ENCODE measurements at regions of chr9 and their contacts with region 1.

Region 1: DNA sequence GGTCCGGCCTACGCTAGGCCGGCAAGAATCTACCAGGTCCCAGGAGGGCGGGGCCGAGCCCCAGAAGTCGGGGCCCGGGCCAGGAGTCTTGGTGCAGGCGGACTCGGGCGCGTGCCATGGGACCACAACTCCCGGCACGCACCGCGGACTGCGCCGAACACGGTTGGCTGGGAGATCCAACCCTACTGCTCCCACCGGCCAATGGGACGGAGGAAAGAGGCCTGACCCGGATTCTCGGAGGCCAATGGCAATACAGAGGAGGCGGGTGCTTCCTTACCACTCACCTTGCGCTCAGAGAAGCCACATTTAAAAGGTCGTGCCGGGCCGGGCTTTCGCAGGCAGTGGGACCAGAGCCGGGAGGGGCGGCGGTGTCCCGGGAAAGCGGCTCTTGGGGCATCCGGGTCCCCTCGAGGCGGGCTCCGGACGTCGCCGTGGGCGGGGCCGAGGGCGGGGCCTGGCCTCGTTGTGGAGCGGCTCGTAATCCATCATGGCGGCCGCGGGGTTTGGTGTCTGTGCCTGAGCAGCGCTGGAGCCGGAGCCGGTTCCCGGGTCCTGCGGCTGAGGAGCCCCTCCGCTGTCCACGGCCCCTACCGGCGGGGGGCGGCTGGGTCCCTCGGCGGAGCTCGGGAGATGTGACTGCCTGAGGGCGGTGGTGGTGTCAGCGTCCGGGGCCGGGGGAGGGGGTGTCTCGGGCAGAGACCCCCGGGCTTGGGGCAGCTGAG is 19.1 kb downstream of the EXOSC2 start:
- DNase-seq: peak; percentile 99
- H3K4me3 Mint-ChIP-seq: peak overlapping the region; percentile 94
- H3K27ac Mint-ChIP-seq: peak overlapping the region; percentile 98
- H3K4me1 Mint-ChIP-seq: peaks cover 8% of the 10 kb centered on the region
- H3K27me3 Mint-ChIP-seq: no peaks in the 10 kb centered on the region
- CTCF ChIP-seq: no peak

Region 2: GRCh38 chr9:130561056-130561455 is 151.7 kb before region 1 on chr9:
- CTCF ChIA-PET with region 1: no interaction called
- POLR2A ChIA-PET with region 1: no interaction called
- intact Hi-C with region 1: no loop called
- DNase-seq: peak; percentile 82
- H3K4me3 Mint-ChIP-seq: no peak overlapping the region
- H3K27ac Mint-ChIP-seq: peak overlapping the region; percentile 31
- H3K4me1 Mint-ChIP-seq: peaks cover 16% of the 10 kb centered on the region
- H3K27me3 Mint-ChIP-seq: no peaks in the 10 kb centered on the region
- CTCF ChIP-seq: no peak

Region 3: DNA sequence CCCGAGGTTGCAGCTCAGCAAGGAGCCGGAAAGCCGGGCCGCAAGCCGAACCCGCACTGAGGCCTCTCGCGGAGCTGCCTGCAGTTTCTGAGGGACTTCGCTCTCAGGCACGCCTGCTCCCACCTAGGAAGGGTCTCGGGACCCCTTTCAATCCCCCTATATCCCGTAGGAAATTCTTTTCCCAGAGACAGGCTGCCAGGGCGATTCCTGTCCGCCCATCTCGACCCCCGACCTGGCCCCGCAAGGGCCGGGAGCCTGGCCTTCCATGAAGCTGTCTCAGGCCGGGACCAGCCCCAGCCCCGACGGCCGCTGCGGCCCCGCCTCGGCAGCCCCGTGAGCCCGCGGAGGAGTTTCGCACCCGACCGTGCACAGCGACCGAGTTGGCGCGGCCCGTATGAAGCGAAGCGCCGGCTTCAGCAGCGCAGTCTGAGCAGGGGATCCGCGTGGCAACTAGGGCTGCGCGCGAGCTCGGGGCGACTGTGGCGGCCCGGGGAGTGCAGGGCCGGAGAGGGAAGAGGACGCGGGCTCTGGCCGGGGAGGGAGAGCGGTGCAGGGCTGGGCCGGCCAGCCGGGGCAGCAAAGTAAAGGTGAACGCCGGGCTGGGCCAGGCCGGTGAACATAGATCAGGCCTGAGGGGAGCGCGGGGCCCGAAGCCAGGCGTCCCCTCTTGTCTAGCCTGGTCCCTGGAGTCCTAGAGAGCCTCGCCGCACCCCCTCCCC is 49.3 kb before region 1 on chr9:
- CTCF ChIA-PET with region 1: no interaction called
- POLR2A ChIA-PET with region 1: no interaction called
- intact Hi-C with region 1: no loop called
- DNase-seq: no peak
- H3K4me3 Mint-ChIP-seq: no peak overlapping the region
- H3K27ac Mint-ChIP-seq: no peak overlapping the region
- H3K4me1 Mint-ChIP-seq: no peaks in the 10 kb centered on the region
- H3K27me3 Mint-ChIP-seq: peaks cover 83% of the 10 kb centered on the region
- CTCF ChIP-seq: no peak

Region 4: DNA sequence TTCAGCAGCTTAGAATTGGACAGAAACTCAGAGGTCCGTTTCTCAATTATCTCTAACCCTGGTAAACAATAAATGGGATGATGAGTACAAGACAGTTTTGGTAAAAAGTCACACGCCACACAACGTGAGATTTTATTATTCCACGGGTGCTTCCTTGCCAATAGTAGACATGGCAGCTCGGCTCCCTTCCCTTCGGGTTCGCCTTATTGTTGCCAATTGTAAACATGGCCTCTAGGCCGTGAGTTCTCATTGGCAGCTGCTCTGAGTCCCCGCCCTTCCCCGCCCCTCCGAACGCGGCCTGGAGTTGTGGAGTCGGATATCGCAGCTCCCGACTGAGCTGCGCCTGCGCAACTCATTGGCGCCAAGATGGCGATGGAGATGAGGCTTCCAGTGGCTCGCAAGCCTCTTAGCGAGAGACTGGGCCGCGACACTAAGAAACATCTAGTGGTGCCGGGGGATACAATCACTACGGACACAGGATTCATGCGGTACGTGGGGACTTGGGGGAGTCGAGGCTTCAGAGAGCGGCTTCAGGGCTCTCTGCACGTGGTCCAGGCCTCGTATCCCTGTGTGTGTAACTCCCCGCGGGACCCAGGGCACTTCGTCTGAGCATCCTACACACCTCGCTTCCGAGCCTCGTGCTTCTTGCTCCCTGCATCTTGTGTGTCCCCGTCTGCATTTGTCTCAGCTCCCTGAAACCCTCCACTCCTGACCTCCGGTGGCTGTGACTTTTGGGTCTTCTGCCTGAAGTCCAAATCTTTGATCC is 19.1 kb before region 1 on chr9 and contains the start of gene EXOSC2:
- CTCF ChIA-PET with region 1: interaction called, 29 read pairs
- POLR2A ChIA-PET with region 1: interaction called, 34 read pairs
- intact Hi-C with region 1: no loop called
- DNase-seq: peak; percentile 98
- H3K4me3 Mint-ChIP-seq: peak within 1 kb of the TSS; percentile 91
- H3K27ac Mint-ChIP-seq: peak within 1 kb of the TSS; percentile 89
- H3K4me1 Mint-ChIP-seq: peaks cover 41% of the 10 kb centered on the region
- H3K27me3 Mint-ChIP-seq: no peaks in the 10 kb centered on the region
- CTCF ChIP-seq: no peak
- total RNA-seq, gene EXOSC2: 42.3 and 57.7 TPM in 2 replicates

Region 5: GRCh38 chr9:130701056-130702022 is 11.4 kb before region 1 on chr9:
- CTCF ChIA-PET with region 1: interaction called, 29 read pairs
- POLR2A ChIA-PET with region 1: interaction called, 4 read pairs
- intact Hi-C with region 1: no loop called
- DNase-seq: peak; percentile 76
- H3K4me3 Mint-ChIP-seq: no peak overlapping the region
- H3K27ac Mint-ChIP-seq: no peak overlapping the region
- H3K4me1 Mint-ChIP-seq: peaks cover 19% of the 10 kb centered on the region
- H3K27me3 Mint-ChIP-seq: no peaks in the 10 kb centered on the region
- CTCF ChIP-seq: peak; percentile 79

Region 6: DNA sequence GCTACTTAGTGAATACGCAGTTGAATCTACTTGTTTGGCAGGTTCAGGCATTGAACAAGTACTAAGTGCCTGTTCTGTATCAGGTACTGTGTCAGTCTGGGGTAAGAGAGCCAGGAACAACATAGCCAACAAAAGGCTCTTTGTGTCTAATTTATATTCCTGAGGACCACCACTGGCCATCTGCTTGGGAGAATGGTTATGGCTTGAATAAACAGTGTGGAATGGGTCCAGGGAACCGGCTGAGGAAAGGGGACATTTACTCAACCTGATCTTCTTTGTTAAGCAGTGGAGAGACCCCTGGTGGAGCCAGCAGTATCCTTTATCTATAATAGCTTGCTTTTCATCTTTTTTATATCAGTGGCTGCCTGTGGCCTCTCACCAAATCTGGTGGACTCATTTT is 19.4 kb after region 1 on chr9:
- CTCF ChIA-PET with region 1: interaction called, 5 read pairs
- POLR2A ChIA-PET with region 1: interaction called, 13 read pairs
- intact Hi-C with region 1: no loop called
- DNase-seq: no peak
- H3K4me3 Mint-ChIP-seq: no peak overlapping the region
- H3K27ac Mint-ChIP-seq: peak overlapping the region; percentile 64
- H3K4me1 Mint-ChIP-seq: peaks cover 22% of the 10 kb centered on the region
- H3K27me3 Mint-ChIP-seq: no peaks in the 10 kb centered on the region
- CTCF ChIP-seq: no peak

Region 7: DNA sequence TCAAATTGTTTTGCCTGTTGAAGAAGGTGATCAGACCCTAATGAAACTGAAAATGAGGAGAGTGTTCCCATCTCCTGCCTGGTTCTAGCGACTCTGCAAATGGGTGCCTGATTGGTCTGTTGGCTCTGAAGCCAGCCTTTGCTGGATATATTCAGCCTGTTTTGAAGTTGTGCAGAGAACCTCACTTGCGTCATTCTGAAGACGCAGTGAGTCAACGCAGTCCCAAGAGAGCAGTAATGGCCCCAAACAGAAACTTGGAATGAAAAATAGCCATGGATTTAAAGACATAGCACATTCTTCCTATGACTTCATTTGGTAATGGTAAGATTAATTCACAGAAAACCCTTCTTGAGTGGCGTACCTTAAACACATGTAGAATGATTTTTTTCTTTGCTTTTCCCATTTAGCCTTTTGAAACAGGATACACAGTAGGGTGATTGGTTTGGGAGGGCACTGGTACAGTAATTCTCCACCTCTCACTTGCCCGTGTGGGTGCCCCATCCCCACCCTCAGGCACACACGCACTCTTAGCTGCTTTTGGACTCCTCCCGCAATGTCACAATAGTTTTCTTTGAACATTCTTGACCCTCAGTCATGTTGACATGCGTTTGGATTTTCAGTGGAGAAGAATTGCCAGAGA is 68.3 kb after region 1 on chr9:
- CTCF ChIA-PET with region 1: no interaction called
- POLR2A ChIA-PET with region 1: interaction called, 12 read pairs
- intact Hi-C with region 1: no loop called
- DNase-seq: peak; percentile 96
- H3K4me3 Mint-ChIP-seq: peak overlapping the region; percentile 62
- H3K27ac Mint-ChIP-seq: peak overlapping the region; percentile 96
- H3K4me1 Mint-ChIP-seq: peaks cover 32% of the 10 kb centered on the region
- H3K27me3 Mint-ChIP-seq: no peaks in the 10 kb centered on the region
- CTCF ChIP-seq: no peak

Region 8: GRCh38 chr9:130834371-130835311 is 121.9 kb after region 1 on chr9 and contains the start of gene ABL1:
- CTCF ChIA-PET with region 1: no interaction called
- POLR2A ChIA-PET with region 1: interaction called, 19 read pairs
- intact Hi-C with region 1: loop called (anchors 2 kb)
- DNase-seq: peak; percentile 89
- H3K4me3 Mint-ChIP-seq: peak within 1 kb of the TSS; percentile 90
- H3K27ac Mint-ChIP-seq: peak within 1 kb of the TSS; percentile 99
- H3K4me1 Mint-ChIP-seq: peaks cover 47% of the 10 kb centered on the region
- H3K27me3 Mint-ChIP-seq: no peaks in the 10 kb centered on the region
- CTCF ChIP-seq: no peak
- total RNA-seq, gene ABL1: 67.5 TPM in 2 replicates